CD14-positive monocyte (primary cell): ENCODE measurements at regions of chr5 and their contacts with region 1.

Region 1: DNA sequence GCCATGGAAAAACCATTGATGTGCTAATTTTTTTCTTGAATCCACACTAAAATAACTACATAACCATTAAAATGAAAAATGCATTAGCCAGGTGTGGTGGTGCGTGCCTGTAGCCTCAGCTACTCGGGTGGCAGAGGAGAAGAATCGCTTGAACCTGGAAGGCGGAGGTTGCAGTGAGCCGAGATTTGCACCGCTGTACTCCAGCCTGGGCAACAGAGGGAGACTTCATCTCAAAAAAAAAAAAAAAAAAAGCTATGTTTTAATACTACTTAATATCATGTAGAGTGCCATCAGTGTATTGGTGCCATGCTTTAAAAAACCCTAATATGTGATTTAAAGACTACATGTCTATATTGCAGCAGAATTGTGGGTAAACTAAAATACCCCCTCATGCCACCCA is 58.9 kb downstream of the NDFIP1 start:
- DNase-seq: no peak
- H3K4me3 ChIP-seq: no peak overlapping the region
- H3K4me3 Mint-ChIP-seq: no peak overlapping the region
- H3K27ac ChIP-seq: no peak overlapping the region
- H3K27ac Mint-ChIP-seq: no peak overlapping the region
- H3K4me1 ChIP-seq: no peaks in the 10 kb centered on the region
- H3K4me1 Mint-ChIP-seq: no peaks in the 10 kb centered on the region
- H3K27me3 ChIP-seq: no peaks in the 10 kb centered on the region
- H3K27me3 Mint-ChIP-seq: peaks cover 2 to 4% (median 3%) of the 10 kb centered on the region in 3 donors
- CTCF ChIP-seq: no peak

Region 2: DNA sequence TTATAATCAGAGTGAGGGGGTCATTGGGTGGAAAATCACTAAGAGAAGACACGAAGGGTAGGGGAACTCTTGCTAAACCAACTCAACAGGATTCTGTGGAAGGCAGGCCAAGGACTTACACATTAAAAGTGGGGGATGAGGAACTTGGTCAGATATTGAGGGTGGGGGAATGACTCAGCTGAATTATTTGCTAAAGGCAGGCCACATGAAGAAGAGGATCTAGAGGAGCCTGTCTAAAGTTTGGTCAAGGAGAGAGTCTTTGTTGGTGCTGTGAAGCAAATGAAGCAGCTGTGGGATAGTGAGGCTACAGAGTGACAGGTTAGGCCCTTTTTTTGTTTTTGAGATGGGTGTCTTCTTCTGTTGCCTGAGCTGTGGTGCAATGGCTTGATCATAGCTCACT is 221.2 kb after region 1 on chr5:
- intact Hi-C with region 1: no loop called
- DNase-seq: peak; percentile 53 to 61 (median 61)
- H3K4me3 ChIP-seq: no peak overlapping the region
- H3K4me3 Mint-ChIP-seq: peak overlapping the region in 1 of 2 donors; percentile 12
- H3K27ac ChIP-seq: no peak overlapping the region
- H3K27ac Mint-ChIP-seq: peak overlapping the region in 5 of 7 donors; percentile 5 to 64 (median 52)
- H3K4me1 ChIP-seq: peaks cover 37 to 46% of the 10 kb centered on the region in 2 donors
- H3K4me1 Mint-ChIP-seq: peaks cover 43% of the 10 kb centered on the region
- H3K27me3 ChIP-seq: peaks cover 15 to 29% of the 10 kb centered on the region in 2 donors
- H3K27me3 Mint-ChIP-seq: peaks cover 50 to 59% (median 50%) of the 10 kb centered on the region in 3 donors
- CTCF ChIP-seq: no peak

Region 3: GRCh38 chr5:142548739-142549275 is 381.3 kb after region 1 on chr5:
- intact Hi-C with region 1: loop called in 1 of 2 experiments (anchors 10 kb)
- DNase-seq: no peak
- H3K4me3 ChIP-seq: no peak overlapping the region
- H3K4me3 Mint-ChIP-seq: peak overlapping the region in 1 of 2 donors; percentile 44
- H3K27ac ChIP-seq: no peak overlapping the region
- H3K27ac Mint-ChIP-seq: no peak overlapping the region
- H3K4me1 ChIP-seq: no peaks in the 10 kb centered on the region
- H3K4me1 Mint-ChIP-seq: no peaks in the 10 kb centered on the region
- H3K27me3 ChIP-seq: peaks cover 41 to 49% of the 10 kb centered on the region in 2 donors
- H3K27me3 Mint-ChIP-seq: peaks cover 37 to 49% (median 47%) of the 10 kb centered on the region in 3 donors
- CTCF ChIP-seq: peak; percentile 52